PC-9 (cell line): ENCODE measurements at regions of chr12 and their contacts with region 1.

Region 1: DNA sequence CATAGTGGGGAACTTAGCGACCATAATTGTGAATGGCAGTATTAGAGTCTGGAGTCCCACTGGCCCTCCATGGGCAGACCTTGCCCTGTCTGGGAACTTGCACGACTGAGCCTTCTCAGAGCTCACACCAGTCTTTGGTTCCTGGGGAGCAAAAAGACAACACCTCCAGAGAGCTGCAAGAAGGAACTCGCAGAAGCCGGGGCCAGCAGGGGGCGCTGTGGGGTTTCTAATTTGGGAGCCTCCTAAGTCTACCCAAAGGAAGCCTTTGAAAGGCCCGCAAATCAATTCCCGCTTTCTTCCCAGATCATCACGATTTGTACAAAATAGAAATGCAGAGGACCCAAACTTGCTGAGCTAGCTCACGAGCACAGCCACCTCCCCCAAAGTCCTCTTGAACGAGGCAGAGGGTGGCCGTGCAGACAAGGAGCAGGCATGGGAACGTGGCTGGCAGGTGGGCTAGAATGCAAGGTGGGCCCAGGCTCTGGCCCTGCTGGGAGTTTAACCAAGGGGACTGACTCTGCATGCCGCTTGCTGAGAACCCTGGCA is 46.3 kb upstream of the FBXO21 start:
- DNase-seq: peak; percentile 53 to 58
- H3K4me3 ChIP-seq: no peak overlapping the region
- H3K27ac ChIP-seq: no peak overlapping the region
- H3K4me1 ChIP-seq: no peaks in the 10 kb centered on the region
- H3K27me3 ChIP-seq: peaks cover 90% of the 10 kb centered on the region
- CTCF ChIP-seq: peak; percentile 88

Region 2: DNA sequence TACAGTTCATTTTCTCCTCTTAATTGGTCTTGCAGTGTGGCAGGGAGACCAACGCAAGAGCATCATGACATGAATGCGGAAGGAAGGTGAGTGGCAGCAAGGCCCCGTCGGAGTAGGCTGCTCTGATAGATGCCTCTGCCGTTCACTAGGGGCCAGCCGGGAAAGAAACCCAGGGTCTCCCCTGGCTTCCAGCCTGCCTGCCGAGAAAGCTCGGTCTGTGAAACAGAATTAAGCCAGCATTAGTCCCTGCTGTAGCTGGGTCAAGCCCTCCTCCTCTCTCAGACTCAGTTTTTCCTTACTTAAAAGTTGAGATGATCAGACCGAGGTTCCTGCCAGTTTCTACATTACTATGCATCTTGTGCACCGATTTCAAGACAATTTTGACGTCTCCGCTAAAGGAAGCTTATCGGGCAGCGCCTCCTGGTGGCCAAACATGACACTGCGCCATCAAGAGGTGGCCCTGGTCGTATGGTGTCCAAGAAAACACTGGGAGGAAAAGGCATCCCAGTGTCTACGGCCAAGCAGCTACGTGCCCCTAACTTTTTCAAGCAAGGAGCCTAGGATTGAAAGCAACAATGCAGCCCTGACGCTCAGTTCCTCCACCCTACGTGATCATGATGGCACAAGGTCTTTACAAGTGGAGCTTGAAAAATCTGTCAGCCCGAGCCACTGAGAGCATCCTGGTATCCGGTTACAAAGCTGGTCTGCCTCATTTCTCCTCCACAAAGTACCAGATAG is 600.6 kb after region 1 on chr12:
- CTCF ChIA-PET with region 1: no interaction called
- POLR2A ChIA-PET with region 1: no interaction called
- intact Hi-C with region 1: loop called (anchors 1 kb)
- DNase-seq: peak; percentile 66 to 69
- H3K4me3 ChIP-seq: no peak overlapping the region
- H3K27ac ChIP-seq: no peak overlapping the region
- H3K4me1 ChIP-seq: no peaks in the 10 kb centered on the region
- H3K27me3 ChIP-seq: 0 out of 2 replicates have a peak, but pooled peaks cover 5% of the 10 kb centered on the region
- CTCF ChIP-seq: peak; percentile 99

Region 3: GRCh38 chr12:117857632-117858612 is 621.4 kb after region 1 on chr12:
- CTCF ChIA-PET with region 1: no interaction called
- POLR2A ChIA-PET with region 1: no interaction called
- intact Hi-C with region 1: loop called (anchors 1 kb)
- DNase-seq: peak; percentile 34 to 50
- H3K4me3 ChIP-seq: no peak overlapping the region
- H3K27ac ChIP-seq: no peak overlapping the region
- H3K4me1 ChIP-seq: peaks cover 15% of the 10 kb centered on the region
- H3K27me3 ChIP-seq: no peaks in the 10 kb centered on the region
- CTCF ChIP-seq: peak; percentile 76